PC-9 (cell line): ENCODE measurements at regions of chr3 and their contacts with region 1.

Region 1: GRCh38 chr3:184777336-184778004 is 34.5 kb upstream of the VPS8 start:
- DNase-seq: peak; percentile 88 to 92
- H3K4me3 ChIP-seq: no peak overlapping the region
- H3K27ac ChIP-seq: no peak overlapping the region
- H3K4me1 ChIP-seq: no peaks in the 10 kb centered on the region
- H3K27me3 ChIP-seq: peaks cover 18% of the 10 kb centered on the region
- CTCF ChIP-seq: peak; percentile 98

Region 2: GRCh38 chr3:184371570-184372018 is 405.9 kb before region 1 on chr3:
- CTCF ChIA-PET with region 1: interaction called, 6 read pairs
- POLR2A ChIA-PET with region 1: no interaction called
- intact Hi-C with region 1: loop called (anchors 1 kb)
- DNase-seq: peak; percentile 84 to 89
- H3K4me3 ChIP-seq: no peak overlapping the region
- H3K27ac ChIP-seq: no peak overlapping the region
- H3K4me1 ChIP-seq: no peaks in the 10 kb centered on the region
- H3K27me3 ChIP-seq: peaks cover 35% of the 10 kb centered on the region
- CTCF ChIP-seq: peak; percentile 99

Region 3: DNA sequence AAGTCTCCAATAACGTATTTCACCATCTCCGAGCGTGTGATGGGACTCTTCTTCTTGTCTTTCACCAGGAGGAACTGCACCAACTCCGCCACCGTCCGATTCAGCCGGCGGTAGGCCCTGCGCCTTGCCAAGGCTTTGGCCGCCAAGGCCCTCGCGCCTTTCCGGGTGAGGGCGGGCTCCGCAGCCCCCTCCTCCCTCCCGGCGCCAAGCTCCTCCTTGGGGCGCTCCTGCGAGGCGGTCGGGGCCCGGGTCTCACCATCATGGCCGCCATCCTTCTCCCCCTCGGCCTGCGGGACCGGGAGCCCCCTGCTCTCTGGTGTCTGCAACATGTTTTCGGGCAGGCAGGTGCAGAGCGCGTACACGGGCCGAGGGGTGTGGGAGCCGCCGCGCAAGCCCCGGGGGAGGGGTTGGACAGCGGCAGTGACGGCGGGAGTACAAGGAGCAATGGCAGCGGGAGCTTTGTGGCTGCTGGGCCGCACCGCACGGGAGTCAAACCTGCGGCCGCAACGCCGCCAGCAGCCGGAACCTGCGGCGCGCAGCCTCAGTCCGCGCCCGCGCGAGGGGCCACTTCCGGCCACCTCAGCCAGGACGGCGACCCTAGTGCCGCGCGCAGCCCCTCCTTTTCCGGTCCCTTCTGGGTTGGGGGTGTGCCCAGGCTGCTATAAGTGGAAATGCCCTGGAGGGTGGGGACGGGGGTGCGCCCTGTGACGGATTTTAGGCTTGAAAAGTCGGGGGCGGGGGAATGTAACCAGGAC is 65.8 kb before region 1 on chr3 and contains the start of gene MAGEF1:
- CTCF ChIA-PET with region 1: interaction called, 3 read pairs
- POLR2A ChIA-PET with region 1: no interaction called
- intact Hi-C with region 1: loop called (anchors 1 kb)
- DNase-seq: peak; percentile 81 to 96
- H3K4me3 ChIP-seq: peak within 1 kb of the TSS; percentile 91
- H3K27ac ChIP-seq: peak within 1 kb of the TSS; percentile 79
- H3K4me1 ChIP-seq: peaks cover 21% of the 10 kb centered on the region
- H3K27me3 ChIP-seq: no peaks in the 10 kb centered on the region
- CTCF ChIP-seq: no peak
- total RNA-seq, gene MAGEF1: 97.2 and 106 TPM in 2 replicates

Region 4: GRCh38 chr3:184740524-184741484 is 36.7 kb before region 1 on chr3:
- CTCF ChIA-PET with region 1: interaction called, 11 read pairs
- POLR2A ChIA-PET with region 1: no interaction called
- intact Hi-C with region 1: no loop called
- DNase-seq: peak; percentile 57 to 74
- H3K4me3 ChIP-seq: no peak overlapping the region
- H3K27ac ChIP-seq: no peak overlapping the region
- H3K4me1 ChIP-seq: peaks cover 43% of the 10 kb centered on the region
- H3K27me3 ChIP-seq: no peaks in the 10 kb centered on the region
- CTCF ChIP-seq: no peak

Region 5: GRCh38 chr3:184808021-184808420 is 30.6 kb after region 1 on chr3:
- CTCF ChIA-PET with region 1: interaction called, 4 read pairs
- POLR2A ChIA-PET with region 1: no interaction called
- intact Hi-C with region 1: loop called (anchors 1 kb)
- DNase-seq: no peak
- H3K4me3 ChIP-seq: no peak overlapping the region
- H3K27ac ChIP-seq: no peak overlapping the region
- H3K4me1 ChIP-seq: peaks cover 16% of the 10 kb centered on the region
- H3K27me3 ChIP-seq: no peaks in the 10 kb centered on the region
- CTCF ChIP-seq: 0 out of 2 replicates have a peak, but pooled peaks have one; percentile 23